IMR-90 (cell line): ENCODE measurements at regions of chr3 and their contacts with region 1.

Region 1: GRCh38 chr3:28485164-28485563 is 136.5 kb upstream of the AZI2 start:
- DNase-seq: no peak
- ATAC-seq: no peak
- H3K4me3 ChIP-seq: no peak overlapping the region
- H3K27ac ChIP-seq: no peak overlapping the region
- H3K4me1 ChIP-seq: no peaks in the 10 kb centered on the region
- H3K27me3 ChIP-seq: no peaks in the 10 kb centered on the region
- CTCF ChIP-seq: no peak
- POLR2A ChIP-seq: no peak
- RAD21 ChIP-seq: no peak

Region 2: DNA sequence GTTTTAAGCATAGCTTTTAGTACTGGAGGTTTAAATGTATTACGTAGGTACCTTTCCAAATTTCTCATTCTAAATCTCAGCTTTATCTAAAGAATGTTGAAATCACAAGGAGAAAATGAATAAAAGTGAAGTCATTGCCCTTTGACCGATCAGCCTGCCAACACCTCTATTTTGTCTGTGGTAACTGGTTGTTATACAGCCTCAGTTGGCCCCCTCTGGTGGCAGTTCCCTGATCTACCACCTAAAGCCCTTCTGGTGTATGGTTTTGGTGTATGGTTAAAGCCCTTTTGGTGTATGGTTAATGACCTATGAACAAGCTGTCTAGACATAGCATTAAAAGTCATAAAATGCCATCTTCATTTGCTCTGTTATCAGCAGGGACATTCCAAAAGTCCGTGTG is 241.7 kb after region 1 on chr3:
- CTCF ChIA-PET with region 1: no interaction called
- POLR2A ChIA-PET with region 1: no interaction called
- dilution Hi-C with region 1: no loop called
- in situ Hi-C with region 1: no loop called
- intact Hi-C with region 1: loop called (anchors 10 kb)
- DNase-seq: no peak
- ATAC-seq: peak; percentile 54; the same call in 1 of the 2 replicates
- H3K4me3 ChIP-seq: no peak overlapping the region
- H3K27ac ChIP-seq: no peak overlapping the region
- H3K4me1 ChIP-seq: no peaks in the 10 kb centered on the region
- H3K27me3 ChIP-seq: no peaks in the 10 kb centered on the region
- CTCF ChIP-seq: peak; percentile 27; the same call in 1 of the 2 replicates
- POLR2A ChIP-seq: no peak
- RAD21 ChIP-seq: no peak